ENCODE measurements at regions of chr6 and their contacts with region 1.

Region 1: DNA sequence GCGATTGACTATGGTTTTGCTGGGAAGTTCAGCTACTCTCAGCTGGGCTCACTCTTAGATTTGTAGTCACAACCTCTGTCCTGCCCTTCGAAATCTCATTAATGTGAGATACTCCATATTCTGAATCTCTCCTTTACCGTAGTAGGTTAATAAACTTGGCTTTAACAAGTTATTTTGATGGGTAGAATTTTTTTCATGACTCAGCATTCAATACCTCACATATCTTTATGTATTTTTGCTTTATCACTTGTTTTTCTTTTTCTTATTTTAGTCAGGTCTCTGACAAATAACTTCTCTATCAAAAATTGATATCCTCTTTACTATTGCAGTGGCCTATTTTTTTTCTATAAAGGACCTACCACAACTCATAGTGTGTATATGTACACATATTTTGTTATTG is 855.2 kb upstream of the ADGRB3 start:
- DNase-seq: no peak
- H3K4me3 ChIP-seq: no peak overlapping the region
- H3K27me3 ChIP-seq: no peaks in the 10 kb centered on the region
- CTCF ChIP-seq: no peak

Region 2: DNA sequence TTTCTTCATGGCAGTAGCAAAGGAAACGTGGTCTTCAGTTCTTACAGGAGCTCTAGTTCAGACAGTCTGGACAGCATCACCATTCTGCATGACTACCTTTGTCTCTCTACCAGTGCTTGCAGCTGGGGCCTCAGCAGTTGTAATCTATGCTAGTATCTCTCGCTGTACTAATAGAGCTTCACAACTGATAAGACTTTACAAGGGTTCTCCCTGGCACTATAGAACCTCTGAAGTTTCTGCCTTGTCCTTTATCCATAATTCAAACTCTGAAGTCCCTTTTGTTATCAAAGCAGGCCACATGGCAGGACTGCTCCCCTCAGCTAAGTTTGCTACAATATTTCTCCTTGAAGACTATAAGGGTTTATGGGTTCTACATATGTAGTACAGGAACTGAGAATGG is 13.1 kb after region 1 on chr6:
- CTCF ChIA-PET with region 1: no interaction called
- POLR2A ChIA-PET with region 1: no interaction called
- DNase-seq: no peak
- H3K4me3 ChIP-seq: no peak overlapping the region
- H3K27me3 ChIP-seq: no peaks in the 10 kb centered on the region
- CTCF ChIP-seq: no peak

Region 3: DNA sequence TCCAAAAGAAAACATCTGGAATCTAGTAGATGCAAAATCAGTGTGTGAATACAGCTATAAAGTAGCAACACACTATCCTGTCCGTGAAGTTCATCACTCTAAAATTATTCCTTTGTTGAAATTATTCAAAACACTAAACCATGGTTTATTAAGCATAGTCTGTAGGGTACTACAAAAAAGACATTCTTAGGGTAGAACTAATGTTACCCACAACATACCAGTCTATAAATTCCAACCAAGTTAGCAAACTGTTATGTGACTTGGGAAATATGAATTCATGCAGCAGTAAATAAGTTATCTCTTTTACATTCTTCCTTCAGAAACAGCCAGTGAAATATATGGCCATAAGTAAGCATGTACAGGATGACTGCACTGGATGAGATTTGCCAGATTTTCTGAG is 274.9 kb after region 1 on chr6:
- CTCF ChIA-PET with region 1: no interaction called
- POLR2A ChIA-PET with region 1: interaction called, 13 read pairs
- DNase-seq: no peak
- H3K4me3 ChIP-seq: no peak overlapping the region
- H3K27me3 ChIP-seq: no peaks in the 10 kb centered on the region
- CTCF ChIP-seq: no peak

Region 4: DNA sequence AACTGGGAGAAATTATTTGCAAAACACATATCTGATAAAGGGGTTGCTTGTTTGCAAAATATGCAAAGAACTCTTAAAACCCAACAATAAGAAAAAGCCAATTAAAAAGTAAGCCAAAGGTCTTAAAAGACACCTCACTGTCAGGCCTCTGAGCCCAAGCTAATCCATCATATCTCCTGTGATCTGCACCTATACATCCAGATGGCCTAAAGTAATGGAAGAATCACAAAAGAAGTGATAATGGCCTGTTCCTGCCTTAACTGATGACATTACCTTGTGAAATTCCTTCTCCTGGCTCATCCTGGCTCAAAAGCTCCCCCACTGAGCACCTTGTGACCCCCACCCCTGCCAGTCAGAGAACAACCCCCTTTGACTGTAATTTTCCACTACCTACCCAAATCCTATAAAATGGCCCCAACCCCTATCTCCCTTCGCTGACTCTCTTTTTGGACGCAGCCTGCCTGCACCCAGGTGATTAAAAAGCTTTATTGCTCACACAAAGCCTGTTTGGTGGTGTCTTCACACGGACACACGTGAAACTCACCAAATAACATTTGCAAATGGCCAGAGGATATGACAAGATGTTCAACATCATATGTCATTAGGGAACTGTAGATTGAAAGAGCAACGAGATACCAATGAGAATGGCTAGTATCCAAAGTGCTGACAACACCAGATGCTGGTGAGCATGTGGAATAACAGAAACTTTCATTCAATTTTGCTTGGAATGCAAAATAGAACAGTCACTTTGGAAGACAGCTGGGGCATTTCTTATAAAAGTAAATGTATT is 290.2 kb after region 1 on chr6:
- CTCF ChIA-PET with region 1: no interaction called
- POLR2A ChIA-PET with region 1: no interaction called
- DNase-seq: no peak
- H3K4me3 ChIP-seq: no peak overlapping the region
- H3K27me3 ChIP-seq: no peaks in the 10 kb centered on the region
- CTCF ChIP-seq: no peak

Measured in BJ (cell line).